Common myeloid progenitor, CD34-positive (primary cell): ENCODE measurements at regions of chr10 and their contacts with region 1.

Region 1: DNA sequence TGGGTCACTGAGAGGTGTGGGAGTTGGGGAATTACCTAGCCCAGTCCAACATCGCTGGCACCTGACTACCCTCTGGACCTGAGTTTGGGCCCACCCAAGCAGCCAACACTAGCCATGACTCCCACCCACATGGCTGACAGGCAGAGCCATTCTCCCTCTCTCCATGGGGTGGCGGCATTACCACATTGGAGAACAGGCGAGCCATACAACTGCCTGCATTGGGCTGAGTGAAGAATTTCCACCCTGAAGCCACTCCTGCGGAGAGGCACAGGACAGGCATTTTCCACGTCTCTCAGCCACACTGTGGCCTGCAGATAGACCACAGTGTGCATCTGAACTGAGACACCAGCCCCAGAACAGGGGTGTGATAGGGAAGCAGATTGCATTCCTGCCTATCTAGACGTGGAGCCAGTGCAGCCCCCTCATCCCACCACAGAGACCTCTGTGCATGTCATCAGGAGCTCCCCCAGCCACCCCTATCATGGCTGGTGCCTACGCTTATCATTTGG is 58.2 kb upstream of the ANTXRL start:
- DNase-seq: peak; percentile 65 to 82 (median 80)
- H3K4me3 ChIP-seq: no peak overlapping the region
- H3K27ac ChIP-seq: no peak overlapping the region
- H3K4me1 ChIP-seq: peaks cover 0 to 31% (median 21%) of the 10 kb centered on the region in 4 experiments
- H3K27me3 ChIP-seq: no peaks in the 10 kb centered on the region

Region 2: GRCh38 chr10:46216836-46217751 is 11.5 kb before region 1 on chr10:
- CTCF ChIA-PET with region 1: interaction called, 25 read pairs
- POLR2A ChIA-PET with region 1: no interaction called
- DNase-seq: peak in 2 of 3 donors; percentile 71 to 82
- H3K4me3 ChIP-seq: peak overlapping the region in 1 of 7 experiments; percentile 1
- H3K27ac ChIP-seq: no peak overlapping the region
- H3K4me1 ChIP-seq: peaks cover 0 to 42% (median 37%) of the 10 kb centered on the region in 4 experiments
- H3K27me3 ChIP-seq: no peaks in the 10 kb centered on the region

Region 3: GRCh38 chr10:46239247-46239646 is 10.6 kb after region 1 on chr10:
- CTCF ChIA-PET with region 1: interaction called, 45 read pairs
- POLR2A ChIA-PET with region 1: no interaction called
- DNase-seq: no peak
- H3K4me3 ChIP-seq: no peak overlapping the region
- H3K27ac ChIP-seq: no peak overlapping the region
- H3K4me1 ChIP-seq: no peaks in the 10 kb centered on the region
- H3K27me3 ChIP-seq: no peaks in the 10 kb centered on the region

Region 4: GRCh38 chr10:46255801-46256747 is 27.5 kb after region 1 on chr10:
- CTCF ChIA-PET with region 1: interaction called, 12 read pairs
- POLR2A ChIA-PET with region 1: no interaction called
- DNase-seq: peak; percentile 46 to 60 (median 52)
- H3K4me3 ChIP-seq: no peak overlapping the region
- H3K27ac ChIP-seq: no peak overlapping the region
- H3K4me1 ChIP-seq: peaks cover 0 to 4% (median 0%) of the 10 kb centered on the region in 4 experiments
- H3K27me3 ChIP-seq: no peaks in the 10 kb centered on the region

Region 5: GRCh38 chr10:46544989-46545791 is 316.6 kb after region 1 on chr10:
- CTCF ChIA-PET with region 1: interaction called, 17 read pairs
- POLR2A ChIA-PET with region 1: no interaction called
- DNase-seq: peak; percentile 61 to 68 (median 68)
- H3K4me3 ChIP-seq: no peak overlapping the region
- H3K27ac ChIP-seq: no peak overlapping the region
- H3K4me1 ChIP-seq: peaks cover 0 to 9% (median 4%) of the 10 kb centered on the region in 4 experiments
- H3K27me3 ChIP-seq: peaks cover 0 to 17% (median 7%) of the 10 kb centered on the region in 5 experiments